Naive thymus-derived CD4-positive, alpha-beta T cell (primary cell): ENCODE measurements at regions of chr6 and their contacts with region 1.

Region 1: DNA sequence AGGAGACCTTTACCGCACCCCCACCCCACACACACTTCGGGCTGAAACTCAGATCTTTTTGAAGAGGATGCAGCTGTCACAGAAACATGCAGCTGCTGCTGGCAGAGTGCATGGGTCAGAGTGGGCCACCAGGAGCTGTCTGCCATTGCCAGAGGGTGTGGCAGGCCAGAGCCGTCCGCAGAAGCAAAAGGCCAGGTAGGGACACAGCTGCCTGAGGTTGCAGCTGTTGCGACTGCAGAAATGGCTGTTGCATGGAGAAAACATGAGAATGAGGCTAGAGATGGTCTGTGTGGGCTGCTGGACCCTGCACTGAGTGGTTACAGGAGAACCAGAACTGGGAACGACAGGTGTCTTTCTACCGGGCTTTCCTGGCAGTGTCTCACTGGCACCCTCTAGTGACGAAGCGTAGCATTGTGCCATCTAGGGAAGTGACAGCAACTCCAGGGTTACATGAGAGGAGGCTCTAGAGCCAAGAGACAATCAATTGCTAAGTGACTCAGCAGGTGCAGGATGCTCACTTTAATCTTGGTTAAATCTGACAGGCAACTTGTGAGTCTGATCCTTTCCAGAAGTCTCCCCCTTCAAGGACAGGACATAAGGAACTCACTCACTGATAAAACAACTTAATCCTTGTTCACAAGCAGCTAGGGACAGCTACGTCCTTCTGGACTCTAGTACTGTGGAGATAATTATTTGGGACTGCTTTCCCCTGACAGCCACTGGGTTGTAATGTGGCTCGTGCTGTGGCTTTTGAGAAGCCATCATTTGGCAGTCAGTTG is 29.1 kb upstream of the SERPINB9 start:
- DNase-seq: peak; percentile 61 to 87 (median 82)
- ATAC-seq: peak; percentile 99
- H3K4me3 ChIP-seq: no peak overlapping the region
- H3K4me3 Mint-ChIP-seq: peak overlapping the region in 8 of 10 donors; percentile 28 to 71 (median 44)
- H3K27ac ChIP-seq: no peak overlapping the region
- H3K27ac Mint-ChIP-seq: peak overlapping the region in 8 of 9 donors; percentile 3 to 86 (median 60)
- H3K4me1 ChIP-seq: peaks cover 8 to 20% of the 10 kb centered on the region in 2 donors
- H3K4me1 Mint-ChIP-seq: peaks cover 8 to 42% (median 26%) of the 10 kb centered on the region in 7 donors
- H3K27me3 ChIP-seq: no peaks in the 10 kb centered on the region
- H3K27me3 Mint-ChIP-seq: peaks cover 0 to 10% (median 0%) of the 10 kb centered on the region in 5 donors

Region 2: DNA sequence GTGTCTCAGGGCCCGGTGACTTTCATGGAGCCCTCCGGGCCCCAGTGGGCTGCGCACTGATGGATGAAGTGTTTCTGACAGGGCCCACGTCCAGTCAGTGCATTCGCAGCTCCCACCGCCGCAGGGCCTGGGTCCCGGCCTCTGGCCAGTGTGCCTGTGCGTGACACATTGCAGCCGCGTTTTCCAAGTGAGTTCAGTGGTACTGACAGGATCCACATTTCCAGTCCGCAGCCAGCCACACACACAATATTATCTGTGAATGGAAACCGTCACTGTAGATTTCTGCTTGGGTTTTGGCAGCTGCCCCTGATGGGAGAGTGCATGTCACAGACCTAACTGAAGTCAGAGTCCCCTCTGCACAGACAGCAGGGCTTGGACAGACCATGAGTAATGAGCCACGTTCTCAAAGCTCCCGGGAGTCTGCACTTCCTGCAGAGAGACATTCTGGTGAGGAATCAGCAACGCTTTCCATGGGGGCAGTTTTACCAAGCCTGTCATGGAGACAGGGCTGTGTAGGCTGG is 352.9 kb before region 1 on chr6:
- CTCF ChIA-PET with region 1: no interaction called
- POLR2A ChIA-PET with region 1: no interaction called
- intact Hi-C with region 1: no loop called
- DNase-seq: no peak
- ATAC-seq: no peak
- H3K4me3 ChIP-seq: no peak overlapping the region
- H3K4me3 Mint-ChIP-seq: no peak overlapping the region
- H3K27ac ChIP-seq: no peak overlapping the region
- H3K27ac Mint-ChIP-seq: no peak overlapping the region
- H3K4me1 ChIP-seq: no peaks in the 10 kb centered on the region
- H3K4me1 Mint-ChIP-seq: no peaks in the 10 kb centered on the region
- H3K27me3 ChIP-seq: no peaks in the 10 kb centered on the region
- H3K27me3 Mint-ChIP-seq: peaks cover 26 to 58% (median 36%) of the 10 kb centered on the region in 5 donors

Region 3: GRCh38 chr6:2738373-2738979 is 193.7 kb before region 1 on chr6:
- CTCF ChIA-PET with region 1: no interaction called
- POLR2A ChIA-PET with region 1: interaction called, 4 read pairs
- intact Hi-C with region 1: loop called in 1 of 2 experiments (anchors 1 kb)
- DNase-seq: peak in 8 of 9 donors; percentile 27 to 59 (median 50)
- ATAC-seq: peak; percentile 72
- H3K4me3 ChIP-seq: no peak overlapping the region
- H3K4me3 Mint-ChIP-seq: no peak overlapping the region
- H3K27ac ChIP-seq: no peak overlapping the region
- H3K27ac Mint-ChIP-seq: no peak overlapping the region
- H3K4me1 ChIP-seq: no peaks in the 10 kb centered on the region
- H3K4me1 Mint-ChIP-seq: peaks cover 0 to 5% (median 0%) of the 10 kb centered on the region in 7 donors
- H3K27me3 ChIP-seq: no peaks in the 10 kb centered on the region
- H3K27me3 Mint-ChIP-seq: peaks cover 0 to 21% (median 0%) of the 10 kb centered on the region in 5 donors

Region 4: DNA sequence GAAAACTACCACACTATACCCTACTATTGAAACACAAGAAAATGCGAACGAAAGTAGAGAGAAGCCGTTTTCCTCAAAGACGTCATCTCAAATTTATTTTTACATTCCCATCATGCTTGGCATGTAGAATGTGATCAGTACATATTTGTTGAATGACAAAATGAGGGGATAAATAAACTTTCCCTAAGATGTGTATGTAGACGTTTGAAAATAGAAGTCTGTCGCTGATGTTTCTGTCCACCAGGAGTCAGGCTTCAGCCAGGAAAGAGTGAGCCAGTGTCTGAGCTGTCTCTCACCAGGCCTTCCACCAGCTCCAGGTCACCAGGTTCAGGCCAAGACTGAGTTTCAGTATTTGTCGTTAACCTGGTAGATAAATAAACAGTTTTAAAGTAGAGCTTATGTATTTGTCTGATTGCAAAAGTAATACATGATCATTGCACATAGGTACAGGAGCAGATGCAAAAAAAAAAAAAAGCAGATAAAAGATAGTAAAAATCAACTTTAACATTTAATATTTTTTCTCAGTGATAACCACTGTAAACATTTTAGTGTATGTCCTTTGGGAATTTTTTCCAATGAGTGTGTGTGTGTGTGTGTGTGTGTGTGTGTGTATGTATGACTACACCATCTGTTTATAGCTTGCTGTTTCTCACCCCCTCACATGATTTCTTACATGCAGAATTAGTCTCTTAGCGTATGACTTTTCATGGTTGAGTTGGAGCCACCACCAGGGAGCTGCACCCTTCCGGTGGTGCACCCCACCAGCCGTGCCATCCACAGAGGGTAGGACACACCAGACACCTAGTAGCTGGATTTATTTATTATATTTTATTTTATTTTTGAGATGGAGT is 140.8 kb before region 1 on chr6:
- CTCF ChIA-PET with region 1: interaction called, 30 read pairs
- POLR2A ChIA-PET with region 1: interaction called, 4 read pairs
- intact Hi-C with region 1: loop called (anchors 1 kb)
- DNase-seq: peak in 8 of 9 donors; percentile 10 to 61 (median 53)
- ATAC-seq: peak; percentile 73
- H3K4me3 ChIP-seq: no peak overlapping the region
- H3K4me3 Mint-ChIP-seq: peak overlapping the region in 8 of 10 donors; percentile 12 to 71 (median 56)
- H3K27ac ChIP-seq: no peak overlapping the region
- H3K27ac Mint-ChIP-seq: peak overlapping the region; percentile 29 to 90 (median 81)
- H3K4me1 ChIP-seq: peaks cover 15 to 19% of the 10 kb centered on the region in 2 donors
- H3K4me1 Mint-ChIP-seq: peaks cover 29 to 44% (median 36%) of the 10 kb centered on the region in 7 donors
- H3K27me3 ChIP-seq: no peaks in the 10 kb centered on the region
- H3K27me3 Mint-ChIP-seq: no peaks in the 10 kb centered on the region

Region 5: GRCh38 chr6:2971420-2972218 is 39.5 kb after region 1 on chr6 and contains the start of gene SERPINB6:
- CTCF ChIA-PET with region 1: interaction called, 3 read pairs
- POLR2A ChIA-PET with region 1: interaction called, 10 read pairs
- intact Hi-C with region 1: loop called in 1 of 2 experiments (anchors 1 kb)
- DNase-seq: peak in 8 of 9 donors; percentile 31 to 57 (median 44)
- ATAC-seq: peak; percentile 70
- H3K4me3 ChIP-seq: peak within 1 kb of the TSS; percentile 66
- H3K4me3 Mint-ChIP-seq: peak within 1 kb of the TSS; percentile 83 to 94 (median 91)
- H3K27ac ChIP-seq: peak within 1 kb of the TSS; percentile 72
- H3K27ac Mint-ChIP-seq: peak within 1 kb of the TSS; percentile 77 to 95 (median 93)
- H3K4me1 ChIP-seq: peaks cover 7 to 19% of the 10 kb centered on the region in 2 donors
- H3K4me1 Mint-ChIP-seq: peaks cover 14 to 62% (median 48%) of the 10 kb centered on the region in 7 donors
- H3K27me3 ChIP-seq: no peaks in the 10 kb centered on the region
- H3K27me3 Mint-ChIP-seq: peaks cover 0 to 66% (median 0%) of the 10 kb centered on the region in 5 donors
- total RNA-seq, gene SERPINB6: 19.7 to 60.5 (median 56.4) TPM